HEK293T (cell line): ENCODE measurements at regions of chr17 and their contacts with region 1.

Region 1: DNA sequence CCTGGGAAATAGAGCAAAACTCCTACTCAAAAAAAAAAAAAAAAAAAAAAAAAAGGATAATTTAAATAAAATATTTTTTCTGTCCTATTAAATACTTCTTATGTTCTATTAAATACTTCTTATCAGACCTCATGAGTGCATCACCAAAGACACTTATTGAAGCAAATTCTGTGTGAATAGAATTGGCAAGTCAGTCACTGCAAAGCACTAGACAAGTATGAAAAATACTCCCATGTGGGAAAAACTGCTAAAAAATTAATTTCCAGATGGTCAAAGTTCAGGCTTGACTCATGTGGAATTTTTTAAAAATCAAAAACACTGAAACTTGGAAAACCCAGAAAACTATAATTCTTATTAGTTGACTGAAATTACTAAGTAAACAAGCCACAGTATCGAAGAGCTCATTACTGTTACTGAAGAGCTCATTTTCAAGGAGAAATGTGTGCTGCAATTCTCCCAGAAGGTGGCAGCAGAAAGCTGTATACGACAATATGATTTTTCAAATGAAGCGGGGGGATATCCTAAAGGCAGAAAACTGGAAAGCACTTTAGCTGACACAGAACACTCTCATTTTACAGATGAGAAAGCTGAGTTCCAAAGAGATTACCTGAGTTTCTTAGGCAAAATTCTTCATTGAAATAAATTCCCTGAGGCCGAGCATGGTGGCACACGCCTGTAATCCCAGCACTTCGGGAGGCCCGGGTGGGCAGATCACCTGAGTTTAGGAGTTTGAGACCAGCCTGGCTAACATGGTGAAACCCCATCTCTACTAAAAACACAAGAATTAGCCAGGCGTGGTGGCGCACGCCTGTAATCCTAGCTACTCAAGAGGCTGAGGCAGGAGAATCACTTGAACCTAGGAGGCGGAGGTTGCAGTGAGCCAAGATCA is 15.9 kb upstream of the FBXO47 start:
- DNase-seq: peak; percentile 44

Region 2: GRCh38 chr17:38916771-38917170 is 66.3 kb before region 1 on chr17:
- CTCF ChIA-PET with region 1: no interaction called
- POLR2A ChIA-PET with region 1: no interaction called
- DNase-seq: no peak

Region 3: GRCh38 chr17:39164675-39165143 is 181.6 kb after region 1 on chr17:
- CTCF ChIA-PET with region 1: interaction called, 17 read pairs
- POLR2A ChIA-PET with region 1: no interaction called
- DNase-seq: peak; percentile 80